Sciatic nerve (tissue), 2 donors: ENCODE measurements at regions of chr5 and their contacts with region 1.

Region 1: GRCh38 chr5:150458819-150459557 is 9.4 kb upstream of the RPS14 start:
- DNase-seq: peak; percentile 91
- ATAC-seq: peak; percentile 95

Region 2: GRCh38 chr5:150419630-150420270 is 39.2 kb before region 1 on chr5:
- intact Hi-C with region 1: no loop called
- DNase-seq: no peak
- ATAC-seq: no peak

Region 3: GRCh38 chr5:150497274-150497988 is 38.4 kb after region 1 on chr5:
- intact Hi-C with region 1: no loop called
- DNase-seq: no peak
- ATAC-seq: peak; percentile 80

Region 4: GRCh38 chr5:150532996-150533395 is 74.0 kb after region 1 on chr5:
- intact Hi-C with region 1: loop called (anchors 5 kb)
- DNase-seq: no peak
- ATAC-seq: peak; percentile 40